Astrocyte of the cerebellum (primary cell): ENCODE measurements at regions of chr9 and their contacts with region 1.

Region 1: DNA sequence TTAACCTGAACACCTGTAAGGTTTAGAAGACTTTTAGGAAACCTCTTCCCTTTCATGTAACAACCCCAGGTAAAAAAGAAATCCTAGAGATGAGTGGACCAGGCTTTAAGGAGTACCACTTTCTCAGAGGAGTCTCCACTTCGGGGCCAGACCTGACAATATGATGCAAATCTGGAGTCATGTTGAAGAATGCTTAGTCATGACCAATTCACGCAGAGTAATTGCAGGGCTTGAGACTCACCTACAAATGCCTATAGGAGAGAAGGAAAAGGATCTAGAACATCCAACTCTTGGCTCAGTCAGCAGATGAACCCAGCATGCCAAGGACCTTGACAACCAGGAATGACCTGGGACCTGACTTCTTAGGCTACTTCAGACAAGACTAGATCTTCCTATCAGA is 235.4 kb downstream of the DOCK8 start:
- DNase-seq: no peak
- H3K4me3 ChIP-seq: no peak overlapping the region
- CTCF ChIP-seq: no peak

Region 2: GRCh38 chr9:495739-496138 is 45.7 kb after region 1 on chr9:
- in situ Hi-C with region 1: loop called (anchors 5 kb)
- DNase-seq: no peak
- H3K4me3 ChIP-seq: no peak overlapping the region
- CTCF ChIP-seq: no peak

Region 3: GRCh38 chr9:530681-531080 is 80.6 kb after region 1 on chr9:
- in situ Hi-C with region 1: no loop called
- DNase-seq: no peak
- H3K4me3 ChIP-seq: no peak overlapping the region
- CTCF ChIP-seq: no peak